Gastrocnemius medialis (tissue), 4 donors: ENCODE measurements at regions of chr16 and their contacts with region 1.

Region 1: GRCh38 chr16:75110637-75111513 is 5.7 kb downstream of the LDHD start:
- DNase-seq: peak; percentile 86 to 94
- ATAC-seq: peak; percentile 47 to 50
- H3K4me3 ChIP-seq: peak overlapping the region; percentile 32 to 38 (median 34)
- H3K27ac ChIP-seq: peak overlapping the region; percentile 97 to 99 (median 97)
- H3K4me1 ChIP-seq: peaks cover 73 to 81% of the 10 kb centered on the region in 2 donors
- H3K27me3 ChIP-seq: no peaks in the 10 kb centered on the region
- CTCF ChIP-seq: peak; percentile 92 to 98 (median 95)
- POLR2A ChIP-seq: peak in 1 of 2 donors; percentile 12

Region 2: GRCh38 chr16:75043175-75043895 is 67.5 kb before region 1 on chr16:
- in situ Hi-C with region 1: no loop called
- intact Hi-C with region 1: no loop called
- DNase-seq: no peak
- ATAC-seq: no peak
- H3K4me3 ChIP-seq: no peak overlapping the region
- H3K27ac ChIP-seq: peak overlapping the region; percentile 75 to 85 (median 80)
- H3K4me1 ChIP-seq: peaks cover 56 to 61% of the 10 kb centered on the region in 2 donors
- H3K27me3 ChIP-seq: no peaks in the 10 kb centered on the region
- CTCF ChIP-seq: no peak
- POLR2A ChIP-seq: no peak

Region 3: GRCh38 chr16:75053791-75054555 is 56.9 kb before region 1 on chr16:
- in situ Hi-C with region 1: no loop called
- intact Hi-C with region 1: loop called (anchors 5 kb)
- DNase-seq: peak; percentile 81
- ATAC-seq: peak; percentile 88 to 90
- H3K4me3 ChIP-seq: no peak overlapping the region
- H3K27ac ChIP-seq: peak overlapping the region; percentile 66 to 90 (median 72)
- H3K4me1 ChIP-seq: peaks cover 49 to 54% of the 10 kb centered on the region in 2 donors
- H3K27me3 ChIP-seq: no peaks in the 10 kb centered on the region
- CTCF ChIP-seq: no peak
- POLR2A ChIP-seq: no peak

Region 4: GRCh38 chr16:75087375-75087979 is 23.4 kb before region 1 on chr16:
- in situ Hi-C with region 1: no loop called
- intact Hi-C with region 1: loop called (anchors 1 kb)
- DNase-seq: peak; percentile 62 to 72
- ATAC-seq: peak; percentile 92 to 94
- H3K4me3 ChIP-seq: peak overlapping the region; percentile 27 to 51 (median 35)
- H3K27ac ChIP-seq: peak overlapping the region; percentile 84 to 91 (median 90)
- H3K4me1 ChIP-seq: peaks cover 66 to 68% of the 10 kb centered on the region in 2 donors
- H3K27me3 ChIP-seq: no peaks in the 10 kb centered on the region
- CTCF ChIP-seq: peak in 1 of 5 experiments; percentile 31
- POLR2A ChIP-seq: no peak

Region 5: DNA sequence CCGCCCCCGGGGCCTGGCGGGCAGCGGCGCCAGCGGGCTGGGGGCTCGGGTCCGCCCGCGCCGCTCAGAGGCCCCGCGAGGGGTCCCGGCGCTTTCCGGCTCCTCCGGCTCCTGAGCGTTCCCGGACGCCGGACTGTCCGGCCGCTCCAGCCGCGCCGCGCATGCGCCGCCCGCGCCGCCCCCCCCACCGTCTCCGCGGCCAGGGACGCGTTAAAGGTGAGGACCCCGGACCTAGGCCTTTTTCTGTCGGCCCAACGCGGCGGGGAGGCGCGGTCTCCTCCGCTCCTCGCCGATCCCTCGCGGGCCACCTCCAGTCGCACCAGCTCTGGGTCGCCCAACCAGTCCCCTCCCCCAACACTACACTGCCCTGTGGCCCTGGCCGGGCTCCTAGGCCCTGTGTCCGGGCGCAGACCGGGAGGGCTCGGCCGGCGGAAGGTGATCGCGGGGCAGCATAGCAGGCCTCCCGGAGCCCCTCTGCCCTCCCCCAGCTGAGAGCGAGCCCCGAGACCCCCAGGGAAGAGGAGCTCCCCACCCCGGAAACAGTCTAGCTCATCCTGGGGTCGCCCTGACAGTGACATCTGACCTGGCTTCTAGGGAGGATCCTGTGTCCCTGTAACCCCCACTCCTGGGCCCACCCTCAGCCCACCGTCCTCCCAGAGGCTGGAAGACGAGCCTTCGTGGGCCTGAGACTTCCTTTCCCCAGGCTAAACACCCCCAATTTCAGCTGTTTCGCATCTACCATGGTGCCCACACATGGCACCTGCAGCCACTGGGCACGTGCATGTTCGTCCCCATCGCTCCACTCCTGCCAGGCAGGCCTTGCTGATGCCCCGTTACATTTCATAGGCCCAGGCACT is 155.2 kb after region 1 on chr16:
- in situ Hi-C with region 1: no loop called
- intact Hi-C with region 1: loop called (anchors 10 kb)
- DNase-seq: peak; percentile 70 to 86
- ATAC-seq: peak; percentile 37 to 51
- H3K4me3 ChIP-seq: peak overlapping the region; percentile 75 to 97 (median 90)
- H3K27ac ChIP-seq: peak overlapping the region; percentile 95 to 100 (median 98)
- H3K4me1 ChIP-seq: peaks cover 56 to 62% of the 10 kb centered on the region in 2 donors
- H3K27me3 ChIP-seq: no peaks in the 10 kb centered on the region
- CTCF ChIP-seq: no peak
- POLR2A ChIP-seq: peak; percentile 97 to 98

Region 6: GRCh38 chr16:75305364-75306098 is 194.7 kb after region 1 on chr16:
- in situ Hi-C with region 1: no loop called
- intact Hi-C with region 1: loop called (anchors 5 kb)
- DNase-seq: peak; percentile 87 to 95
- ATAC-seq: peak; percentile 97 to 98
- H3K4me3 ChIP-seq: peak overlapping the region in 3 of 4 donors; percentile 4 to 21 (median 12)
- H3K27ac ChIP-seq: peak overlapping the region; percentile 86 to 91 (median 90)
- H3K4me1 ChIP-seq: peaks cover 26 to 27% of the 10 kb centered on the region in 2 donors
- H3K27me3 ChIP-seq: no peaks in the 10 kb centered on the region
- CTCF ChIP-seq: no peak
- POLR2A ChIP-seq: peak; percentile 61 to 73